Heart right ventricle (tissue), 16 donors: ENCODE measurements at regions of chr13 and their contacts with region 1.

Region 1: DNA sequence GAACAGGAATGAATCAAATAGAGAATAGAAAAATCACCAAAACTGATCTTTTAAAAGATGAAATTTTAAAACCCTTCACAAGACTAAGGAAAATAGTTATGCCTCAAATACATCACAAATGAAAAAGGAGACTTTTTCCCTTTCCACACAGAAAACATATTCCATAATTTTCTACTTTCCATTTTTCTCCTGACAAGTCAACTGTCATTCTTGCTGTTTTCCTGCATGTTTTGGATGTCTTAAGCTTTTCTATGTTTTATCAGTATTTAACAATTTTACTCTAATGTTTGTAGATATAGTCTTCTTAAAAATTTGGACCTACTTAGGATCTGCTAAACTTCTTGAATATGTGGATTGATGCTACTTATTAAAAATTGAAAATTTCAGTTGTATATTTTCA is 810.8 kb downstream of the OLFM4 start:
- DNase-seq: no peak
- ATAC-seq: no peak
- H3K4me3 ChIP-seq: no peak overlapping the region
- H3K27ac ChIP-seq: no peak overlapping the region
- H3K4me1 ChIP-seq: no peaks in the 10 kb centered on the region
- H3K27me3 ChIP-seq: no peaks in the 10 kb centered on the region
- CTCF ChIP-seq: no peak

Region 2: DNA sequence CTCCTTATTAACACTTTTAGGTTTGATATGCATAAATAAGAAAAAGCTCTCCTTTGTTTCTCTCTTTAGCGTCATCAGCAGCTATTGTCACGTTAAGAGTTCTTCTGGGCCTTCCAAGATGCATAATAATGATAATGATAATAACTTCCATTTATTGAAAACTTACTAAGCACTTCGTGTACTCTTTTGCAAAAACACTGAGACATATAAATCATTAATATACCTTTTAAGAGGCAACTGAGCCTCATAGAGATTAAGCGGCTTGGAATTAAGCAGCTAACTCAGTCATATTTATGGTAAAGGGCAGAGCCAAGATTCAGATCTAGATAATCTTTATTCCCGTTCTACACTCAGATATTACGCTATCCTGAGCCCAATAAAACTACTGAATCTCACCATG is 294.3 kb after region 1 on chr13:
- intact Hi-C with region 1: loop called in 1 of 10 experiments (anchors 10 kb)
- DNase-seq: no peak
- ATAC-seq: no peak
- H3K4me3 ChIP-seq: no peak overlapping the region
- H3K27ac ChIP-seq: no peak overlapping the region
- H3K4me1 ChIP-seq: no peaks in the 10 kb centered on the region
- H3K27me3 ChIP-seq: no peaks in the 10 kb centered on the region
- CTCF ChIP-seq: no peak